MCF 10A (cell line): ENCODE measurements at regions of chr5 and their contacts with region 1.

Region 1: GRCh38 chr5:149035372-149035790 is 27.5 kb downstream of the SH3TC2 start:
- DNase-seq: peak; percentile 87
- H3K4me3 Mint-ChIP-seq: no peak overlapping the region
- H3K27ac Mint-ChIP-seq: no peak overlapping the region
- H3K4me1 Mint-ChIP-seq: peaks cover 17% of the 10 kb centered on the region
- H3K27me3 Mint-ChIP-seq: no peaks in the 10 kb centered on the region
- CTCF ChIP-seq: peak; percentile 96

Region 2: DNA sequence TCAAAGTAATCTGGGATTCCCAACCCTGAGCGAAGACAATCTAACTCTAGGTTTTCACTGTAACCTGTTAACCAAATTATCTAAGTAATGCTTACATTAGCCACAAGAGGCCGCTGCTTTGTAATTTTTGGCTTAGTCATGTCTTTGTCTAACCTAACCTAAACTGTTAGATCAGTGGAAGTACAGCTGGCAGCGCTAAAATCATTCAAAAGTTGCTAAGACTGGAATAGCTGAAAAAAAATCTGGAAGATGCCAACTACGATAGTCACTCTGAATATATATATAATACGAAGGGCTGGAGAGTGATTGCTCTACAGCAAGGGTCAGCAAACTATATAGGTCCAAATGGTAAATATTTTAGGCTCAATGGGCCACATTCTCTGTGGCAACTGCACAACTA is 591.4 kb before region 1 on chr5:
- CTCF ChIA-PET with region 1: interaction called, 45 read pairs
- POLR2A ChIA-PET with region 1: no interaction called
- intact Hi-C with region 1: loop called (anchors 1 kb)
- DNase-seq: peak; percentile 87
- H3K4me3 Mint-ChIP-seq: no peak overlapping the region
- H3K27ac Mint-ChIP-seq: no peak overlapping the region
- H3K4me1 Mint-ChIP-seq: no peaks in the 10 kb centered on the region
- H3K27me3 Mint-ChIP-seq: no peaks in the 10 kb centered on the region
- CTCF ChIP-seq: peak; percentile 74

Region 3: DNA sequence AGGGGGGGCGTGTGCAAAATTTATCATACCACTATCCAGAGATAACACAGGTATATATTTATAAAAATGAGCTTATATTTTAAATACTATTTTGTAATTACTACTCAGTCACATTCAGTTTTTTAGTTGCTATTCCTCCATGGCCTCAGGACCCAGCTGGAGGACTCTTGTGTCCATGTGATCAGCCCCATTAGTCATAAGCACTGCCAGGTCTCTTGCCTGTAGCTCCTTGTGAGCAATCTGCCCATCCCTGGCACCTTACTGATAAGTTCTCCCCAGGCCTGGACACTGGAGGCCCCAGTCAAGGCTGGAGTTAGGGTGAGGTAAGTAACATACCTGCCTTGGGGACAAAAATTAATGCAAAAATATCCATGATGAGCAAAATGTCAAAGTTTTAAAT is 238.4 kb before region 1 on chr5:
- CTCF ChIA-PET with region 1: interaction called, 10 read pairs
- POLR2A ChIA-PET with region 1: no interaction called
- intact Hi-C with region 1: no loop called
- DNase-seq: peak; percentile 55
- H3K4me3 Mint-ChIP-seq: no peak overlapping the region
- H3K27ac Mint-ChIP-seq: no peak overlapping the region
- H3K4me1 Mint-ChIP-seq: peaks cover 28% of the 10 kb centered on the region
- H3K27me3 Mint-ChIP-seq: no peaks in the 10 kb centered on the region
- CTCF ChIP-seq: no peak

Region 4: GRCh38 chr5:148864113-148864841 is 171.1 kb before region 1 on chr5:
- CTCF ChIA-PET with region 1: interaction called, 10 read pairs
- POLR2A ChIA-PET with region 1: no interaction called
- intact Hi-C with region 1: no loop called
- DNase-seq: no peak
- H3K4me3 Mint-ChIP-seq: no peak overlapping the region
- H3K27ac Mint-ChIP-seq: no peak overlapping the region
- H3K4me1 Mint-ChIP-seq: no peaks in the 10 kb centered on the region
- H3K27me3 Mint-ChIP-seq: no peaks in the 10 kb centered on the region
- CTCF ChIP-seq: no peak

Region 5: GRCh38 chr5:148984333-148984732 is 51.0 kb before region 1 on chr5:
- CTCF ChIA-PET with region 1: interaction called, 15 read pairs
- POLR2A ChIA-PET with region 1: interaction called, 6 read pairs
- intact Hi-C with region 1: no loop called
- DNase-seq: peak; percentile 89
- H3K4me3 Mint-ChIP-seq: no peak overlapping the region
- H3K27ac Mint-ChIP-seq: peak overlapping the region; percentile 95
- H3K4me1 Mint-ChIP-seq: peaks cover 68% of the 10 kb centered on the region
- H3K27me3 Mint-ChIP-seq: no peaks in the 10 kb centered on the region
- CTCF ChIP-seq: no peak

Region 6: DNA sequence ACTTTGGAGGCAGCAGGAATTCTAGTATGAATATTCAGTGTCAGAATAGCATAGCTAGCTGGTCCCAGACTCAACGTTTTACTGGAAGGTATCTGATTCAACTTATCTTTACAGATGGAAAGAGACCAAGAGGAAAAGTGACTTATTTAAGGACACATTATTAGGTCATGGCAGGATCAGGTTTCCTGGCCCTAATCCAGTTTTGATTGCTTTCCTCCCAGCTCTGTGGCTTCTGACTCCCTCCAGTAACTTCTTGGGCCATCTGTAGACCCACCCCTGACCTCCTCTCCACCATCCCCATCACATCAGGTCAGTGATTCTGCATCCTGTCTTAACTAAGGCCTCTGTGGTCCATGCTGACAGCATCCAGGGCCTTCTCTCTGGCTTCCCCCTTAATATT is 10.9 kb before region 1 on chr5:
- CTCF ChIA-PET with region 1: interaction called, 80 read pairs
- POLR2A ChIA-PET with region 1: interaction called, 4 read pairs
- intact Hi-C with region 1: no loop called
- DNase-seq: peak; percentile 39
- H3K4me3 Mint-ChIP-seq: no peak overlapping the region
- H3K27ac Mint-ChIP-seq: no peak overlapping the region
- H3K4me1 Mint-ChIP-seq: peaks cover 16% of the 10 kb centered on the region
- H3K27me3 Mint-ChIP-seq: no peaks in the 10 kb centered on the region
- CTCF ChIP-seq: no peak

Region 7: GRCh38 chr5:149108651-149109280 is 73.4 kb after region 1 on chr5:
- CTCF ChIA-PET with region 1: interaction called, 149 read pairs
- POLR2A ChIA-PET with region 1: interaction called, 6 read pairs
- intact Hi-C with region 1: no loop called
- DNase-seq: no peak
- H3K4me3 Mint-ChIP-seq: no peak overlapping the region
- H3K27ac Mint-ChIP-seq: no peak overlapping the region
- H3K4me1 Mint-ChIP-seq: peaks cover 18% of the 10 kb centered on the region
- H3K27me3 Mint-ChIP-seq: no peaks in the 10 kb centered on the region
- CTCF ChIP-seq: no peak